ENCODE measurements at regions of chr4 and their contacts with region 1.

Region 1: GRCh38 chr4:78951862-78952472 is 12.7 kb upstream of the PAQR3 start:
- DNase-seq: no peak
- H3K4me3 Mint-ChIP-seq: no peak overlapping the region
- H3K27ac Mint-ChIP-seq: no peak overlapping the region
- H3K4me1 Mint-ChIP-seq: peaks cover 6% of the 10 kb centered on the region
- H3K27me3 Mint-ChIP-seq: peaks cover 40% of the 10 kb centered on the region

Region 2: DNA sequence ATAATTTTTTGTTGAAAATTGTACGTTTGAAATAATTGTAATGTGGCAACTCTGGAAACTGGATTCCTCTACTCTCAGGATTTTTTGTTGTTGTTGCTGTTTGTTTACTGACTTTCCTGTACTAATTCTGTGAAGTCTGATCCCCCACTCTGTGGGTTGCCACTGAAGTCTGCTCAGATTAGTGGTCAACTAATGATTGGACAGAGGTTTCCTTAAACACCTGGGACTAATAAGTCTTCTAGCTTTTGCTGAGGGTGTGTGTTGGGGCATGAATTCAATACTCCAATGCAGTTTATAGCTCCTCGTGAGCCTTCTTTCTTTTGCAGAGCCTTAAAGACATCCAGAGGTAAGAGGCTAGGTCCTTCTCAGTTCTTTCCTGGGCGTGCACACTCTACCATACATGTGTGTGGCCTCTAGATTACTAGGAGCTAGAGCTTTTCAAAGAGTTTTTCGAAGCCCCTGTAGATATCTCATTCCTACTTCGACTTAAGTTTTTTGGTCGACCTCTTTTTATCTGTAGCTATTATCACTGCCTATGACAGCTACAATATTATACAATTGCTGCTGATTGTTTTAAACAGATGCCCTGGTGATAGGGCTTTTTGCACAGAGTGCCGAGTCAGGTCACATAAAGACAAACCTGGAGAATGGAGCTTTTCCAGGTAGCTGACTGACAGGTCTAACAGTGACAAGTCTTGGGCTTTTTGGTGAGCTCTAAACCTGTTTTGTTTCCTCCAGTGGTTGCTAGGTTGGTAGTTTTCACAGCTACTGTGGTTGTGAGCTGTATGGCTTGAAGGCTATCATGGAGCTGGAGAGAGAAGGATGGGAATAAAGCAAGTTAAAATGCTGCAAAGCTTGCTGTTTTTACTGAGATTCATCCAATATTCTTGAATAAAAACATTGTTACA is 141.8 kb before region 1 on chr4:
- intact Hi-C with region 1: no loop called
- DNase-seq: no peak
- H3K4me3 Mint-ChIP-seq: no peak overlapping the region
- H3K27ac Mint-ChIP-seq: no peak overlapping the region
- H3K4me1 Mint-ChIP-seq: peaks cover 2% of the 10 kb centered on the region
- H3K27me3 Mint-ChIP-seq: no peaks in the 10 kb centered on the region

Region 3: DNA sequence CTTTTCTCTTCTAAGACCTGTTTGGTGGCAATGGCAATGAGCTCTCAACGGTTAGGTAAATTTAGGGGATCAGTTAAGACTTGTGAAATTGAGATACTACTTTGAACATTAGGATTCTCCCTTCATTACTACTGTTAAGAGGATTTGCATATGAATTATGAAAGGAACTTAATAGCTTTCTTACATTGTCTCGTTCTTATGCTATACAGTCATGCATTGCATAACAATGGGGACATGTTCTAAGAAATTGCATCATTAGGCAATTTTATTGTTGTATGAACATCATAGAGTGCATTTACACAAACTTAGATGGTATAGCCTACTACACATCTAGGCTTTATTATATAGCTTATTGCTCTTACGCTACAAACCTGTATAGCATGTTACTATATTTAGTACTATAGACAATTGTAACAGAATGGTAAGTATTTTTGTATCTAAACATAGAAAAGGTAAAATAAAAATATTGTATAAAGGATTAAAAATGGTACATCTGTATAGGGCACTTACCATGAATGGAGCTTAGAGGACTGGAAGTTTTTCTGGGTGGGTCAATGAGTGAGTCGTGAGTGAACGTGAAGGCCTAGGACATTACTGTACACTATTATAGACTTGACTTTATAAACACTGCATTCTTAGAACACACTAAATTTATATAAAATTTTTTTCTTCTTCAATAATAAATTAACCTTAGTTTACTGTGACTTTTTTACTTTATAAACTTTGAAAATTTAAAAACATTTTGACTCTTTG is 75.2 kb before region 1 on chr4:
- intact Hi-C with region 1: no loop called
- DNase-seq: no peak
- H3K4me3 Mint-ChIP-seq: no peak overlapping the region
- H3K27ac Mint-ChIP-seq: no peak overlapping the region
- H3K4me1 Mint-ChIP-seq: no peaks in the 10 kb centered on the region
- H3K27me3 Mint-ChIP-seq: no peaks in the 10 kb centered on the region

Region 4: GRCh38 chr4:79831701-79832514 is 879.9 kb after region 1 on chr4:
- intact Hi-C with region 1: loop called (anchors 10 kb)
- DNase-seq: no peak
- H3K4me3 Mint-ChIP-seq: no peak overlapping the region
- H3K27ac Mint-ChIP-seq: no peak overlapping the region
- H3K4me1 Mint-ChIP-seq: peaks cover 4% of the 10 kb centered on the region
- H3K27me3 Mint-ChIP-seq: peaks cover 20% of the 10 kb centered on the region

Region 5: GRCh38 chr4:79917246-79917645 is 965.3 kb after region 1 on chr4:
- intact Hi-C with region 1: loop called (anchors 10 kb)
- DNase-seq: peak; percentile 33
- H3K4me3 Mint-ChIP-seq: no peak overlapping the region
- H3K27ac Mint-ChIP-seq: no peak overlapping the region
- H3K4me1 Mint-ChIP-seq: peaks cover 15% of the 10 kb centered on the region
- H3K27me3 Mint-ChIP-seq: peaks cover 5% of the 10 kb centered on the region

Region 6: GRCh38 chr4:80215449-80216052 is 1263.6 kb after region 1 on chr4:
- intact Hi-C with region 1: loop called (anchors 1 kb)
- DNase-seq: no peak
- H3K4me3 Mint-ChIP-seq: no peak overlapping the region
- H3K27ac Mint-ChIP-seq: no peak overlapping the region
- H3K4me1 Mint-ChIP-seq: peaks cover 1% of the 10 kb centered on the region
- H3K27me3 Mint-ChIP-seq: peaks cover 45% of the 10 kb centered on the region

Measured in activated T-helper 2 cell treated with anti-CD3 and anti-CD28 coated beads, Interferon-gamma antibody, Interleukin-2, Interleukin-4, amounts not matched to agents 10 μg/mL and 5 μg/mL and 100 μg/mL, durations not matched to agents 14 hours and 24 hours and 36 hours (primary cell).